Mammary epithelial cell (primary cell): ENCODE measurements at regions of chr2 and their contacts with region 1.

Region 1: DNA sequence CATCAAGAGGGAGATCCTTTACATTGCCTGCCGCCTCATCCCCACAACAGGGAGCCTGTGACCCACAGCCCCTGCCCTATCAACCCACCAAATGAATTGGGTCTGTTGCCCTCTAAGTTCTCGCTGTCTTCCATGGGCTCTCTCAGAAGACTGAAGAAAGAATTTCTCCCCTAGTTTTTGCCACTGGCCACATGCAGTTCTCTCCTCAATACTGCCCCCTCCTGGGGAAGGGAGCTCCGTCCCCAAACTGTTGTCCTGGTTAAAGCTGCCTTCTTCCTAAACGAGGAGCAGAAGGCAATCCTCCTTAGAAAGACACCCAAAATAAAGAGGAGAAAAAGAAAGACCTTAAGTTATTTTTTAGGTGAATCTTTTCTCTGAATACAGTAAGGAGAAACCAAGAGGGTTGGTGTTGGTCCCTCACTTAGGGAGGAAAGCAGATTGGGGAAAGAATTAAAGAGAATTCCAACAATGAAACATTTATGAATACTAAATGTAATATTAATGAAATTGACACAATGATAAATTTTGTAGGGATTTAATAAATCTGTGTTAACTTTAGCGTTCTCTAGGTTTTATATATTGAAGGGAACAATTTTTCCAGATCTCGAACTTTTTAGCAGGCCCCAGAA is 31.1 kb upstream of the SATB2 start:
- DNase-seq: peak; percentile 43
- H3K4me3 ChIP-seq: no peak overlapping the region
- H3K27ac ChIP-seq: no peak overlapping the region
- H3K4me1 ChIP-seq: no peaks in the 10 kb centered on the region
- H3K27me3 ChIP-seq: no peaks in the 10 kb centered on the region
- CTCF ChIP-seq: peak; percentile 73 to 89

Region 2: DNA sequence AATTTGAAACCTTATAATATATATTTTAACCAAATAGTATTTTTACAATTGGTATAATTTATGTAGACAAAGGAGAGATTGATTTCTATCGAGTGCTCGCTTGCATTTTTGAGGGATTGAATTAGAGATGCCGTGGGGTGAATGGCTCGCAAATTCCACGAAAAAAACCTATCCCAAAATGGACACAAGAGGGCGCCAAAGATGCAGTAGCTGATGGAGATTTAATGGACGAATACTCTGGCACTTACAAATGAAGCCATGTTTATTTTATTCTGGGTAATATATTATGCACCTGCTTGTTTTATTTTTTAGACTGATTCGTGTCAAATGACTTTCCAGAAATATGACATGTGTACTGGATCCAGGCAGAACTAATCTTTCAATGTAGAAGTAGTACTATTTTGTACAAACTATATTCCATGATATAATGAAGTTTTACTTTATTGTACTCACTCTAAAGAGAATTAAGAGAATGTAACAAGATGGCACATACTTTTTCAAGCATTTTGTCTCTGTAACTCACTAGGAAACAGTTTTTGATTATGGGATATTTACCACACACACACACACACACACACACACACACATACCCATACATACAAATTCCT is 1179.1 kb before region 1 on chr2:
- CTCF ChIA-PET with region 1: interaction called, 5 read pairs
- dilution Hi-C with region 1: no loop called
- in situ Hi-C with region 1: loop called (anchors 10 to 25 kb)
- intact Hi-C with region 1: loop called (anchors 1 kb)
- DNase-seq: peak; percentile 27
- H3K4me3 ChIP-seq: no peak overlapping the region
- H3K27ac ChIP-seq: no peak overlapping the region
- H3K4me1 ChIP-seq: peaks cover 4% of the 10 kb centered on the region
- H3K27me3 ChIP-seq: peaks cover 1% of the 10 kb centered on the region
- CTCF ChIP-seq: peak; percentile 86 to 89

Region 3: GRCh38 chr2:198374375-198375082 is 1114.4 kb before region 1 on chr2:
- CTCF ChIA-PET with region 1: no interaction called
- dilution Hi-C with region 1: no loop called
- in situ Hi-C with region 1: no loop called
- intact Hi-C with region 1: loop called (anchors 1 kb)
- DNase-seq: peak; percentile 42
- H3K4me3 ChIP-seq: no peak overlapping the region
- H3K27ac ChIP-seq: no peak overlapping the region
- H3K4me1 ChIP-seq: peaks cover 3% of the 10 kb centered on the region
- H3K27me3 ChIP-seq: no peaks in the 10 kb centered on the region
- CTCF ChIP-seq: peak; percentile 92 to 96

Region 4: DNA sequence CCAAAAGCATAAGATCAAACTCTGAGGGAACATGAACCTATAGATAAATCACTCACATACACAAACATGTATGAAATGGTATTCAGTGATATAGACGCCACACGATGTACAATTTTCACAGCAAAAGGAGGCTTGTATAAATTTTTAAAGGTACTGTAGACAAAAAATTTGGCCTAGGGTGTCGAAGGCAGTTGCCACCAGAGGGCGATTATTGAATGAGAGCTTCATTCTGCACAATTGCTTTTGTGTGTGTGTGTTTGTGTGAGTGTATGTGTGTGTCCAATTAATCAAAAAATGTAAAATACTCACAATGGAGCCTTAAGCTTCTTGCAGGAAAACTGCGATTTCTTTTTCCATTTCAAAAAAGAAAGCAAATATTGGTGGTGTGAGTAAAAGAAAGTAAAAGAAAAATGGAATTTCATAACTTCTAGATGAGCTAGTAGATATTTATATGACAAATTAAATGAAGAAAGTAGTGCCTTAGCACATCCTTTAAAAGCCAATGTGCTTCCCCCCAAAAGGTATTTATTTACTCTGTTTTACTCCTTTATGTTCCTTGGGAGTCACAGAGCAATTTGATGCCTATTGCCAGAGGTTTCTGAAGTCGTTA is 831.3 kb before region 1 on chr2:
- CTCF ChIA-PET with region 1: interaction called, 7 read pairs
- dilution Hi-C with region 1: no loop called
- in situ Hi-C with region 1: loop called in 1 of 2 experiments (anchors 25 kb)
- intact Hi-C with region 1: loop called (anchors 1 kb)
- DNase-seq: peak; percentile 8
- H3K4me3 ChIP-seq: no peak overlapping the region
- H3K27ac ChIP-seq: no peak overlapping the region
- H3K4me1 ChIP-seq: no peaks in the 10 kb centered on the region
- H3K27me3 ChIP-seq: peaks cover 4% of the 10 kb centered on the region
- CTCF ChIP-seq: peak; percentile 37 to 61

Region 5: GRCh38 chr2:198901892-198902291 is 587.0 kb before region 1 on chr2:
- CTCF ChIA-PET with region 1: no interaction called
- dilution Hi-C with region 1: no loop called
- in situ Hi-C with region 1: no loop called
- intact Hi-C with region 1: loop called (anchors 2 kb)
- DNase-seq: no peak
- H3K4me3 ChIP-seq: no peak overlapping the region
- H3K27ac ChIP-seq: no peak overlapping the region
- H3K4me1 ChIP-seq: no peaks in the 10 kb centered on the region
- H3K27me3 ChIP-seq: peaks cover 2% of the 10 kb centered on the region
- CTCF ChIP-seq: no peak

Region 6: GRCh38 chr2:199019898-199020507 is 468.9 kb before region 1 on chr2:
- CTCF ChIA-PET with region 1: interaction called, 3 read pairs
- dilution Hi-C with region 1: no loop called
- in situ Hi-C with region 1: no loop called
- intact Hi-C with region 1: loop called (anchors 1 kb)
- DNase-seq: peak; percentile 7
- H3K4me3 ChIP-seq: no peak overlapping the region
- H3K27ac ChIP-seq: no peak overlapping the region
- H3K4me1 ChIP-seq: no peaks in the 10 kb centered on the region
- H3K27me3 ChIP-seq: no peaks in the 10 kb centered on the region
- CTCF ChIP-seq: peak; percentile 51 to 59

Region 7: DNA sequence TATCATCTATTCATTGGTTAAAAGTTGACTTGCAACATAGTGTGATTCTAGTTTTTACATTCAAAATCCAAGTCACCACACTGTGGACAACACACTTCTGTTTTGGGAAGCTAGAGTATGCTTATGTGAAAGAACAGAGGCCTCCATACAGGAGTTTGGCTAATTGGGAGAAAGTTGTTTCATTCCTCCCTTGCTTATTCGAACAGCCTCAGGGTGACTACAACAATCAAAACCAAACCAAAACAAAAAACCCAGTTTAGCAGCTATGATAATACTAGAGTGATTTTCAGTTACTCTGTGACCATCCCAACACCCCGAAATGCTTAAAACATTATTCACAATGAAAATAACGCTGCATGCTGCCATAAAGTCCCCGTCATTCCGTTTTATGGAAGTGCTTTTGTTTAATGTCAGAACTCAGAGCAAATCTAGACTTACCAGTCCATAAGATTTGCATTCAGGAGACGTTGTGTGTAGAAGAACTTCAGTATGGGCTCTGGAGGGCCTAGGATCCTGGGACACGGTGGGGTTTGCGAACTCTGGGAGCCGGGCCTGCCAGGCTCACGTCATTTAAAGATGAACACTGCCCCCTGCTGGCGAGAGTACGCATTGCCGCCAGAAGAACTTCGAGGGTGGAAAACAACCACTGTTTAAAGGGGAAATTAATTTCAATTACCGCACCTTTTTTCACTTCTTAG is 250.7 kb after region 1 on chr2:
- CTCF ChIA-PET with region 1: no interaction called
- dilution Hi-C with region 1: no loop called
- in situ Hi-C with region 1: no loop called
- intact Hi-C with region 1: no loop called
- DNase-seq: peak; percentile 8
- H3K4me3 ChIP-seq: no peak overlapping the region
- H3K27ac ChIP-seq: no peak overlapping the region
- H3K4me1 ChIP-seq: no peaks in the 10 kb centered on the region
- H3K27me3 ChIP-seq: no peaks in the 10 kb centered on the region
- CTCF ChIP-seq: peak; percentile 82 to 83